Activated naive CD4-positive, alpha-beta T cell treated with anti-CD3 and anti-CD28 coated beads for 36 hours (primary cell): ENCODE measurements at regions of chr12 and their contacts with region 1.

Region 1: DNA sequence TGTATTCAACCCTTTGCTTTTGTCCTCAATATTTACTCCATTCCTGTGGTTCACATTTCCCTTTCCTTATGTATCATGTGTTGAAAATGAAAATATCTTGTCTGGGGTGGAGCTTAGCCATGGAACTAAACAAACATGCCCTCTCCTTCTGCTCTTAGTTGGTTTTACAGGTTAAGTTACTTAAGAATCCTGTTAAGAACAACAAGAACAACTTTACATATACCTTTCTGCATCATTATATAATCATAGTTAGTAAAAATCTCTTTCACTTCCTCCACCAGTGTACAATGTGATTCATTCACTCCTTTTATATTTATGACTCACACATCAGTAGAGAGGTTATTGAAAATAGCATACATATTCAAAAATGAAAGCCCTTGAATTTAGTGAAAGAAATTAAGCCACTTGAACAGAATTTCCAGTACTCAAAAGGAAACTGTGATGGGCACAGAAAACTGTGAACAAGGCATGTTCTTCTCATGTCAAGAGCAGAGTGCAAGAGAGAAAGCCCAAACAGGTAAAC is 307.7 kb downstream of the CCDC91 start:
- DNase-seq: peak; percentile 10
- H3K4me3 Mint-ChIP-seq: no peak overlapping the region
- H3K27ac Mint-ChIP-seq: peak overlapping the region; percentile 46
- H3K4me1 Mint-ChIP-seq: peaks cover 18% of the 10 kb centered on the region
- H3K27me3 Mint-ChIP-seq: no peaks in the 10 kb centered on the region

Region 2: DNA sequence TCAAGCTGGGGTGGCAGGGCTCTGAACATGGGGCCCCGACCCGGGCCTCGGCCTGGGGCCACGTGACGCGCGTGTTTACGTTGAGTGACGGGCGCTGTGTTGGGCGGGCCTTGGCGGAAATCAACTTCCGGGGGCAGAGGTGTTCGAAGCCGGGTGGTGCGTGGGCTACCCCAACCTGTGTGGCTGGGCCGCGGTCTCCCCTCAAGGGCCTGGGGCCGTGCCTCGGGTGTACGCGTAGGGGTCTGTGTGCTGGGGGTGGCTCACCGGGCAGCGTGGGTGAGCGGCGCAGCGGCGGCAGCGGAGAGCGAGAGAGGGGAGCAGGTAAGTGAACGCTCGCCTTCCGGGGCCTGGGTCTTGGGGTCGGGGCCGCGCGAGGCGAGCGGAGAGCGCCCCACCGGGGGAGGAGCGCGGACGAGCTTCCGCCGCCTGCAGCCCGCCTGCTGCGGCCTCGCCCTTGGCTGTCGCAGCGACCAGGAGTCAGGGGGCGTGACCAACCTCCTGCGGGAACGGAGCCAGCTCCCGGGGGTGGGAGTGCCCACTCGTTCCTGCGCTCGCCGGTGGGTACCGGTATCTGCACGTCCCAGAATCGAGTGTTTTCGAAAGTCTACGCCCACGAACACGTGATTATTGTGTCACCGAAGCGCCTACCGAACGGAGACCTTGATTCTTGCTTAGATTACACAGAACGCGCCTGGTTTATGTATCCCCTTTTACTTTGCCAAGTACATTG is 307.5 kb before region 1 on chr12 and contains the start of gene CCDC91:
- CTCF ChIA-PET with region 1: no interaction called
- intact Hi-C with region 1: loop called (anchors 1 kb)
- DNase-seq: peak; percentile 91
- H3K4me3 Mint-ChIP-seq: peak within 1 kb of the TSS; percentile 96
- H3K27ac Mint-ChIP-seq: peak within 1 kb of the TSS; percentile 97
- H3K4me1 Mint-ChIP-seq: peaks cover 57% of the 10 kb centered on the region
- H3K27me3 Mint-ChIP-seq: no peaks in the 10 kb centered on the region
- total RNA-seq, gene CCDC91: 15.3 to 16.1 TPM